HepG2 (cell line): ENCODE measurements at regions of chr11 and their contacts with region 1.

Region 1: GRCh38 chr11:79400717-79401686 is 39.8 kb downstream of the TENM4 start:
- DNase-seq: peak; percentile 12
- ATAC-seq: peak; percentile 89
- H3K4me3 ChIP-seq: no peak overlapping the region
- H3K27ac ChIP-seq: no peak overlapping the region
- H3K4me1 ChIP-seq: no peaks in the 10 kb centered on the region
- H3K27me3 ChIP-seq: no peaks in the 10 kb centered on the region
- CTCF ChIP-seq: peak; percentile 57
- EP300 ChIP-seq: no peak
- POLR2A ChIP-seq: no peak
- RAD21 ChIP-seq: no peak; the same call in 1 of the 2 replicates

Region 2: GRCh38 chr11:79493555-79494171 is 92.7 kb after region 1 on chr11:
- CTCF ChIA-PET with region 1: interaction called, 10 read pairs
- POLR2A ChIA-PET with region 1: no interaction called
- in situ Hi-C with region 1: no loop called
- intact Hi-C with region 1: loop called (anchors 1 kb)
- DNase-seq: peak; percentile 47
- ATAC-seq: peak; percentile 98
- H3K4me3 ChIP-seq: no peak overlapping the region
- H3K27ac ChIP-seq: no peak overlapping the region
- H3K4me1 ChIP-seq: no peaks in the 10 kb centered on the region
- H3K27me3 ChIP-seq: no peaks in the 10 kb centered on the region
- CTCF ChIP-seq: peak; percentile 87
- EP300 ChIP-seq: no peak
- POLR2A ChIP-seq: no peak
- RAD21 ChIP-seq: 0 out of 2 replicates have a peak, but pooled peaks have one; percentile 15

Region 3: GRCh38 chr11:80155412-80156017 is 754.5 kb after region 1 on chr11:
- CTCF ChIA-PET with region 1: no interaction called
- POLR2A ChIA-PET with region 1: no interaction called
- in situ Hi-C with region 1: no loop called
- intact Hi-C with region 1: loop called (anchors 10 kb)
- DNase-seq: peak; percentile 21
- ATAC-seq: peak; percentile 69
- H3K4me3 ChIP-seq: no peak overlapping the region
- H3K27ac ChIP-seq: no peak overlapping the region
- H3K4me1 ChIP-seq: no peaks in the 10 kb centered on the region
- H3K27me3 ChIP-seq: no peaks in the 10 kb centered on the region
- CTCF ChIP-seq: peak; percentile 42
- EP300 ChIP-seq: no peak
- POLR2A ChIP-seq: no peak
- RAD21 ChIP-seq: no peak